Activated naive CD4-positive, alpha-beta T cell treated with anti-CD3 and anti-CD28 coated beads for 36 hours (primary cell): ENCODE measurements at regions of chr9 and their contacts with region 1.

Region 1: GRCh38 chr9:77977210-77977611 is 54.4 kb downstream of the GNAQ start:
- DNase-seq: peak; percentile 80
- H3K4me3 Mint-ChIP-seq: peak overlapping the region; percentile 15
- H3K27ac Mint-ChIP-seq: peak overlapping the region; percentile 83
- H3K4me1 Mint-ChIP-seq: peaks cover 55% of the 10 kb centered on the region
- H3K27me3 Mint-ChIP-seq: no peaks in the 10 kb centered on the region

Region 2: DNA sequence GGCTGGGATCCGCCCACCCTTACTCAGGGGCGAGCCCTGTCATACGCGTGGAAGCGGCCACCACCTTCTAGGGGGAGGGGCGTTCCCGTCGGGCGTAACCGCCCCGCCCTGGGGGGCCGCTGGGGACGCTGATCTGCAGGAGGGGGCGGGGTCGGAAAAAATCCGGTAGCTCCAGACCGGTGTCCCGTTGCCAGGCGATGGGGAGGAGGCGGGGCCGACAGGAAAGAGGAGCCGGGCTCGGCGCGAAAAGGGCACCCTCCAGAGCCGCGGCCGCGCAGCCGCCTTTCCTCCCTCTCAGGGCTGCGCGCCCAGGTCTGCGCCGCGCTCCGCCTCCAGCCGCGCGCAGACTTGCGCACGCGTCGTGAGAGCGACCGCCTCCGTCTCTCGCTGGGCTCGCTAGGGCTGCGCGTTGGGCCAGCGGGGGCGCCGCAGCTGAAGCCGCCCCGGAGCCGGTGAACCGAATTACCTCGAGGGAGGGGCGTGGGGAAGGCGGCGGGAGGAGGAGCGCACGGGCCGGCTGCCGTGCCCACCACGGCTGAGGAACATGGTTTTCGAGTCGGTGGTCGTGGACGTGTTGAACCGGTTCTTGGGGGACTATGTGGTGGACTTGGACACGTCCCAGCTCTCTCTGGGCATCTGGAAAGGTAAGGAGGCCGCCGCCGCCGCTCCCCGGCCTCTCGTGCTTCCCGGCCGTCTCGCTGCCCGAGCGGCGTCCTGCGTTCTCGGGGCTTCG is 799.9 kb before region 1 on chr9 and contains the start of gene VPS13A:
- CTCF ChIA-PET with region 1: interaction called, 3 read pairs
- intact Hi-C with region 1: loop called (anchors 5 kb)
- DNase-seq: peak; percentile 96
- H3K4me3 Mint-ChIP-seq: peak within 1 kb of the TSS; percentile 80
- H3K27ac Mint-ChIP-seq: peak within 1 kb of the TSS; percentile 79
- H3K4me1 Mint-ChIP-seq: peaks cover 23% of the 10 kb centered on the region
- H3K27me3 Mint-ChIP-seq: no peaks in the 10 kb centered on the region
- total RNA-seq, gene VPS13A: 26.8 to 26.9 TPM

Region 3: GRCh38 chr9:77841739-77842386 is 135.3 kb before region 1 on chr9:
- CTCF ChIA-PET with region 1: interaction called, 7 read pairs
- intact Hi-C with region 1: loop called (anchors 5 kb)
- DNase-seq: no peak
- H3K4me3 Mint-ChIP-seq: no peak overlapping the region
- H3K27ac Mint-ChIP-seq: no peak overlapping the region
- H3K4me1 Mint-ChIP-seq: peaks cover 7% of the 10 kb centered on the region
- H3K27me3 Mint-ChIP-seq: no peaks in the 10 kb centered on the region

Region 4: DNA sequence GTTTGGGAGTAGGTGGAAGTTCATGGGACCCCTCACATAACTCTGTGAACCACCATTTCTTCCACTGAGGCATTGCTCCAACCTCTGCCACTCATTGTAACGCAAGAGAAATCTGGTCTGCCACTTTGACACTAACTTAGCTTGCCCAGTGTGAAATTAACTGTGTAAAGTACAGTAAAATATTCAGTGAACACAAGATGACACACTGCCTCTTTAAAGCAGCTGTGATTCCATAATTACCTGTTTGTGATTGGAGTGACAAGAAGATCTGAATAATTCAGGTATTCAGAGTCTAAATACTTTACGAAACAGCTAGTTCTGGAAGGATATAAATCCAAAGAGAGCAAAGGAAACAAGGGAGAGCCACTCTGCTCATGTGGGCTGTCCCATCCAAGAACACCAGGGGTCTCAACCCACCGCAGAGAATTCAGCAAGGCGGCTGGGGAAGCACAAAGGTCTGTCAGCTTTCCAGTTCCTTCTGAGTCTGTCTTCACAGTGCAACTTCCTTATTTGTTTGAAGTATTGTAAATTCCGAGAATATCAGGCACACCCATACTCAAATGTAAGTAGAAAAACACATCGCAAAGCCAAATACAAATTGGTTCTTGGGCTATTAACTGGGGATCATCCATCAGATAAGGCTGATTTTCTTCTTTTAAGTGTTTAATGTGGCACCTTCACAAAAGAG is 32.5 kb before region 1 on chr9:
- CTCF ChIA-PET with region 1: interaction called, 14 read pairs
- intact Hi-C with region 1: no loop called
- DNase-seq: peak; percentile 38
- H3K4me3 Mint-ChIP-seq: peak overlapping the region; percentile 32
- H3K27ac Mint-ChIP-seq: peak overlapping the region; percentile 67
- H3K4me1 Mint-ChIP-seq: peaks cover 51% of the 10 kb centered on the region
- H3K27me3 Mint-ChIP-seq: no peaks in the 10 kb centered on the region

Region 5: DNA sequence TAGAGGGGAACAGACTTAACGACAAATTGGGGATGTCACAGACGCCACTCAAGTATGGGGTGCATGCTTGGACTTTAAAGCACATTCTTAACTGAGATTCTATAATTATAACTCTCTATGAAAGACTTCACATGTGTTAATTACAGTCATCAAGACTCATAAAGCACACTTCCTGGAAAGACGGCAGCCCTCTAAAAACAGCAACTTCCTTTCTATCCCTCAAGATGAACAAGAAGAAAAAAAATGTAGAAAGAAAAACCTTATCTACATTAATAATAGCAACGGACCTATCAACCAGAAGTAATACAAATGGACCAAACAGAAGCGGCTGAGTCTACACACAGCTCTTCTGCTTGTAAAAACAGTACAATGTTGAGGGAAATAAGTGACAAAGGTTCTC is 33.2 kb after region 1 on chr9:
- CTCF ChIA-PET with region 1: no interaction called
- intact Hi-C with region 1: loop called (anchors 1 kb)
- DNase-seq: peak; percentile 42
- H3K4me3 Mint-ChIP-seq: peak overlapping the region; percentile 41
- H3K27ac Mint-ChIP-seq: peak overlapping the region; percentile 80
- H3K4me1 Mint-ChIP-seq: peaks cover 53% of the 10 kb centered on the region
- H3K27me3 Mint-ChIP-seq: no peaks in the 10 kb centered on the region

Region 6: GRCh38 chr9:78296893-78297671 is 319.9 kb after region 1 on chr9 and contains the start of gene PSAT1:
- CTCF ChIA-PET with region 1: no interaction called
- intact Hi-C with region 1: loop called (anchors 5 kb)
- DNase-seq: peak; percentile 95
- H3K4me3 Mint-ChIP-seq: peak within 1 kb of the TSS; percentile 81
- H3K27ac Mint-ChIP-seq: peak within 1 kb of the TSS; percentile 94
- H3K4me1 Mint-ChIP-seq: peaks cover 40% of the 10 kb centered on the region
- H3K27me3 Mint-ChIP-seq: no peaks in the 10 kb centered on the region
- total RNA-seq, gene PSAT1: 235 to 240 TPM